ENCODE measurements at regions of chr4 and their contacts with region 1.

Region 1: GRCh38 chr4:705278-706082 is at the start of gene PCGF3:
- DNase-seq: peak; percentile 89 to 99 (median 92)
- ATAC-seq: peak; percentile 99
- H3K4me3 ChIP-seq: peak within 1 kb of the TSS; percentile 84
- H3K4me3 Mint-ChIP-seq: peak within 1 kb of the TSS; percentile 68 to 96 (median 83)
- H3K27ac ChIP-seq: peak within 1 kb of the TSS; percentile 96
- H3K27ac Mint-ChIP-seq: peak within 1 kb of the TSS; percentile 40 to 93 (median 59)
- H3K4me1 ChIP-seq: peaks cover 9 to 11% of the 10 kb centered on the region in 2 donors
- H3K4me1 Mint-ChIP-seq: peaks cover 21 to 30% (median 23%) of the 10 kb centered on the region in 7 donors
- H3K27me3 ChIP-seq: no peaks in the 10 kb centered on the region
- H3K27me3 Mint-ChIP-seq: no peaks in the 10 kb centered on the region
- total RNA-seq, gene PCGF3: 32.7 to 66.8 (median 42.3) TPM

Region 2: DNA sequence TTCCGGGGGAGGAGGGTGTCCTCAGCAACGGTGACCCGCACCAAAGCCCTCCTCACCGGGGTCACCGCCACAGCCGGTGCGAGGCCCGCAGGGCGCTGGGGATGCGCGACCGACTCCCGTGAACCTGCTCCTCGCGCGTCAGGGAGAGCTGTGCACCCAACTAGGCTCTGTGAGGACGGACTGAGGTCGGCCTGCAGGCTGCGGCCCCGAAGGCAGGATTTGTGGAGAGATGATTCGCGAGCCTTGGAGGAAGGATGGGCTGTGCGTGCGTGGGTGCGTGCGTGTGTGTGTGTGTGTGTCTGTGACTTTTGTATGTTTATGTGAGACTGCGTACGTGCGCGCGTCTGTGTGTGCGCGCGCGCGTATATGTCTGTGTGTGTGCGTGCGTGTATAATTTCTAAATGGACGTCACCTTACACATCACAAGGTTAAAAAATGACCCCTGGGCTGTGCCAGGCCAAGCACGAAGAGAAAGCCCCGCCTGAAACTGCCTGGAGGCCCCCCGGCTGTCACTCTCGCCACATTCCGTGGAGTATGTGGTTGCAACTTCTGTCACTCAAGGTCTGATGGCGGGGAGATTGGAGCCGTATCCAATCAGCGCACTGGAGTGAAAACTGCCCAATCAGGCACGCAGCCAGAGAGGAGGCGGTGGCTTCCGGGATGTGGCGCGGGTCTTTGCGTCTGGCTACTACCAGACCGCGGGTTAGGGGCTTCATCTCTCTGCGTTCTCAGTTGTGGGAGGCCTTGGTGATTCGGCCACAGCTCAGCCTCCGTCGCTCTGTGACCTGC is 368.1 kb before region 1 on chr4 and contains the start of gene ZNF141:
- CTCF ChIA-PET with region 1: no interaction called
- POLR2A ChIA-PET with region 1: no interaction called
- intact Hi-C with region 1: loop called in 1 of 2 experiments (anchors 2 kb)
- DNase-seq: peak; percentile 74 to 95 (median 93)
- ATAC-seq: peak; percentile 93
- H3K4me3 ChIP-seq: peak within 1 kb of the TSS; percentile 91
- H3K4me3 Mint-ChIP-seq: peak within 1 kb of the TSS; percentile 93 to 100 (median 99)
- H3K27ac ChIP-seq: peak within 1 kb of the TSS; percentile 85
- H3K27ac Mint-ChIP-seq: peak within 1 kb of the TSS; percentile 95 to 100 (median 99)
- H3K4me1 ChIP-seq: peaks cover 9 to 10% of the 10 kb centered on the region in 2 donors
- H3K4me1 Mint-ChIP-seq: peaks cover 11 to 46% (median 41%) of the 10 kb centered on the region in 7 donors
- H3K27me3 ChIP-seq: no peaks in the 10 kb centered on the region
- H3K27me3 Mint-ChIP-seq: peaks cover 0 to 6% (median 0%) of the 10 kb centered on the region in 5 donors
- total RNA-seq, gene ZNF141: 19.7 to 76.1 (median 29.0) TPM

Region 3: GRCh38 chr4:650951-651883 is 54.3 kb before region 1 on chr4:
- CTCF ChIA-PET with region 1: no interaction called
- POLR2A ChIA-PET with region 1: no interaction called
- intact Hi-C with region 1: no loop called
- DNase-seq: no peak
- ATAC-seq: no peak
- H3K4me3 ChIP-seq: no peak overlapping the region
- H3K4me3 Mint-ChIP-seq: no peak overlapping the region
- H3K27ac ChIP-seq: no peak overlapping the region
- H3K27ac Mint-ChIP-seq: no peak overlapping the region
- H3K4me1 ChIP-seq: no peaks in the 10 kb centered on the region
- H3K4me1 Mint-ChIP-seq: peaks cover 0 to 5% (median 2%) of the 10 kb centered on the region in 7 donors
- H3K27me3 ChIP-seq: no peaks in the 10 kb centered on the region
- H3K27me3 Mint-ChIP-seq: peaks cover 0 to 27% (median 6%) of the 10 kb centered on the region in 5 donors

Region 4: GRCh38 chr4:663438-664428 is 41.7 kb before region 1 on chr4:
- CTCF ChIA-PET with region 1: no interaction called
- POLR2A ChIA-PET with region 1: no interaction called
- intact Hi-C with region 1: loop called in 1 of 2 experiments (anchors 1 kb)
- DNase-seq: peak; percentile 59 to 77 (median 75)
- ATAC-seq: peak; percentile 91
- H3K4me3 ChIP-seq: peak overlapping the region; percentile 86
- H3K4me3 Mint-ChIP-seq: peak overlapping the region; percentile 72 to 95 (median 86)
- H3K27ac ChIP-seq: peak overlapping the region; percentile 90
- H3K27ac Mint-ChIP-seq: peak overlapping the region; percentile 48 to 93 (median 89)
- H3K4me1 ChIP-seq: peaks cover 4 to 5% of the 10 kb centered on the region in 2 donors
- H3K4me1 Mint-ChIP-seq: peaks cover 3 to 33% (median 13%) of the 10 kb centered on the region in 7 donors
- H3K27me3 ChIP-seq: no peaks in the 10 kb centered on the region
- H3K27me3 Mint-ChIP-seq: no peaks in the 10 kb centered on the region

Region 5: DNA sequence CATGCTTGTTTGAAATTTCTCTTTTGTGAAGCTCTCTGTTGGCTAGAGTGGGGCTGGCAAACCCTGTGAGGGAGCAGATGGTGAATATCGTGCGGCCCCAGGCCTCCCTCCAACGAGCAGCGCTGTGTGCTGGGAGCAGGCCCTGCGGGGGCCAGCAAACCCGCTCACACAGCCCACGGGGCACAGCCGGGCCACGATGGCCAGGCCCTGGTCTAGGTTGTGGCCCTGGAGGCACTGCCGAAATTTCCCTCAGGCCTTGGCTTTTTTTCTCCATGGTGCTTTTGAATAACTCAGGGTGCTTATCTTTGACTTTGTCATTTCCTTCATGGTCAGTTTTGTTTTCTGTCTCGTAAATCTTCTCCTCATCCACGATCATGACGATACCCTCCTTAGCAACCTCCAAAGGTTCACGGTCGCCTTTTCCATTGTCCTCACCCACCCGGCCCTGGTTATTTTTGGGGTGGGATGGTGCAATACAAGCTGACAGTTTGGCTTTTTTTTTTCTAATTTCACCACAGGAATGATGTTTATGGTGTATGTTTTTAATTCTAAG is 20.8 kb after region 1 on chr4:
- CTCF ChIA-PET with region 1: no interaction called
- POLR2A ChIA-PET with region 1: no interaction called
- intact Hi-C with region 1: no loop called
- DNase-seq: no peak
- ATAC-seq: no peak
- H3K4me3 ChIP-seq: no peak overlapping the region
- H3K4me3 Mint-ChIP-seq: peak overlapping the region in 1 of 10 donors; percentile 15
- H3K27ac ChIP-seq: no peak overlapping the region
- H3K27ac Mint-ChIP-seq: peak overlapping the region in 1 of 9 donors; percentile 24
- H3K4me1 ChIP-seq: no peaks in the 10 kb centered on the region
- H3K4me1 Mint-ChIP-seq: peaks cover 4 to 29% (median 20%) of the 10 kb centered on the region in 7 donors
- H3K27me3 ChIP-seq: no peaks in the 10 kb centered on the region
- H3K27me3 Mint-ChIP-seq: no peaks in the 10 kb centered on the region

Region 6: GRCh38 chr4:973431-974397 is 268.2 kb after region 1 on chr4 and contains the start of gene DGKQ:
- CTCF ChIA-PET with region 1: no interaction called
- POLR2A ChIA-PET with region 1: no interaction called
- intact Hi-C with region 1: loop called in 1 of 2 experiments (anchors 1 kb)
- DNase-seq: peak; percentile 68 to 93 (median 83)
- ATAC-seq: peak; percentile 96
- H3K4me3 ChIP-seq: peak within 1 kb of the TSS; percentile 56
- H3K4me3 Mint-ChIP-seq: peak within 1 kb of the TSS; percentile 19 to 75 (median 56)
- H3K27ac ChIP-seq: peak within 1 kb of the TSS; percentile 72
- H3K27ac Mint-ChIP-seq: no peak within 1 kb of the TSS
- H3K4me1 ChIP-seq: peaks cover 13 to 26% of the 10 kb centered on the region in 2 donors
- H3K4me1 Mint-ChIP-seq: peaks cover 0 to 17% (median 10%) of the 10 kb centered on the region in 7 donors
- H3K27me3 ChIP-seq: no peaks in the 10 kb centered on the region
- H3K27me3 Mint-ChIP-seq: no peaks in the 10 kb centered on the region
- total RNA-seq, gene DGKQ: 14.9 to 28.0 (median 22.7) TPM

Region 7: DNA sequence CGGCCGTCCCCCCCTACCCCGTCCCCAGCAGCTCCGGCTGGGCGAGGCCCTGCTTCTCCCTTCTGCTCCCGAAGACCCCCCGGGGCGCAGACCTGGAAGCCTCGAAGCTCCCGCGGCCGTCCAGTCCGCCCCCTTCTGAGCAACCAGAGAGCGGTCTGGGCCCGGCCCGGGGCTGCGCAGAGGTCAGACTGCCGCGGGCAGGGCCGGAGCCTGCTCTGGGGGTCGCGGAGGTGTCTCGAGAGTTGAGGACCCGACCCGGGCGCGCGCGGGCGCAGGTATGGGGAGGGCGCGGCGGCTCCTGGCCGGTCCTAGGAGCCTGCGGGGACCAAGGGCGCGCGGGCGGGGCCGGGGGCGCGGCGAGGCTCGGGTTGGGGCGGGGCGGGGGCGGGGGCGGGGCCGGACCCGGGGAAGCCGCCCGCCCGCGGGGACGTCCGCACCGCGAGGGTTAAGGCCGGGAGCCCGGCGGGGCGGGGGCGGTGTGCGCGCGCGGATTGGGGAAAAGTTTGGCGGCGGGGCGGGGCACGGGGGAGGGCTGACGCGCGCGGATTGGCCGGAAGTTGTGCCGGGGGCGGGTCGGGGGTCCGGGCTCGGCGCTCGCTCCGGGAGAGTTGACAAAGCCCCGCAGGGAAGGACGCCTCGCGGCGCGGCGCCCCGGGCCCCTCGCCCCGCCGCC is 305.7 kb after region 1 on chr4 and contains the start of gene FGFRL1:
- CTCF ChIA-PET with region 1: no interaction called
- POLR2A ChIA-PET with region 1: no interaction called
- intact Hi-C with region 1: loop called (anchors 1 to 2 kb)
- DNase-seq: peak; percentile 78 to 95 (median 87)
- ATAC-seq: peak; percentile 78
- H3K4me3 ChIP-seq: peak within 1 kb of the TSS; percentile 77
- H3K4me3 Mint-ChIP-seq: peak within 1 kb of the TSS; percentile 86 to 97 (median 89)
- H3K27ac ChIP-seq: peak within 1 kb of the TSS; percentile 83
- H3K27ac Mint-ChIP-seq: peak within 1 kb of the TSS; percentile 76 to 96 (median 92)
- H3K4me1 ChIP-seq: peaks cover 0 to 10% of the 10 kb centered on the region in 2 donors
- H3K4me1 Mint-ChIP-seq: peaks cover 15 to 21% (median 18%) of the 10 kb centered on the region in 7 donors
- H3K27me3 ChIP-seq: no peaks in the 10 kb centered on the region
- H3K27me3 Mint-ChIP-seq: peaks cover 24 to 31% (median 27%) of the 10 kb centered on the region in 5 donors
- total RNA-seq, gene FGFRL1: 10.6 to 28.1 (median 22.0) TPM

Region 8: DNA sequence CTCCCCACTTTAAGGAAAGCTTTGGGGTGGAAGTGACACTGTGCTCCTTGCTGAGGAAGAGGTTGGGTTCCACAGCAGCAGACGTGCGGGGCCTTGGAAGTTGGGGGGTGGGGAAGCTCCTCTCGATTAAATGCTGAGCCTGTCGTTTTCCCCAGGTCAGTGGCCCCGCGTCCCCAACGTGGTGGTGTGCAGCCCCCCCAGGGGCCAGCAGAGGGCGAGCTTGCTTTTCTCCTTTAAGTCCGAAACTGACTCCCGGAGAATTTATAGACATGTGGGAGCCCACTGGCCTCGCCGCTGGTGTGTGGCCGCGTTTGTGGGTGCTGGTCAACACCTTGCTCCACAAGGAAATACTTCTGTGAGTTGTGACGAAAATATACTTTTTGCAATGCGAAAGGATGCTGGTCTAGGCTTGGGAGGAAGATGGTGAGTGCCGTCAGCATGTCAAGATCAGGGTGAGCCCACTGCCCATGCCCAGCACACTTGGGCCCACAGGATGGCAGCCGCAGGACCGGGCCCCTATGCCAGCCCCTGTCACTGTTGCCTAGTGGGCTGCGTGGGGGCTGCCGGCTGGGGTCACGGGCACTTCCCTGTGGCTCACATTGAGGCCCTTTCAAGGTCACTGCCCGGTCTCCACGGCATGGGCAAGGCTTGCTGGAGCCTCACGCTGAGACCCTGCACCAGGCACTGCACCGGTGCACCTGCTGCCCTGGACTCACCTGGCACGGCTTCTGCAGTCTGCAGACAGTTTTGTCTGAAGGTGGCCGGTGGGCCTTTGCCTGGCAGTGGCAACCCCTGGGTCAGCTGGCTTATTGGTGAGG is 650.9 kb after region 1 on chr4:
- CTCF ChIA-PET with region 1: no interaction called
- POLR2A ChIA-PET with region 1: no interaction called
- intact Hi-C with region 1: no loop called
- DNase-seq: peak in 7 of 9 donors; percentile 22 to 48 (median 41)
- ATAC-seq: peak; percentile 43
- H3K4me3 ChIP-seq: no peak overlapping the region
- H3K4me3 Mint-ChIP-seq: no peak overlapping the region
- H3K27ac ChIP-seq: no peak overlapping the region
- H3K27ac Mint-ChIP-seq: no peak overlapping the region
- H3K4me1 ChIP-seq: peaks cover 0 to 10% of the 10 kb centered on the region in 2 donors
- H3K4me1 Mint-ChIP-seq: peaks cover 4 to 11% (median 7%) of the 10 kb centered on the region in 7 donors
- H3K27me3 ChIP-seq: no peaks in the 10 kb centered on the region
- H3K27me3 Mint-ChIP-seq: no peaks in the 10 kb centered on the region

Region 9: DNA sequence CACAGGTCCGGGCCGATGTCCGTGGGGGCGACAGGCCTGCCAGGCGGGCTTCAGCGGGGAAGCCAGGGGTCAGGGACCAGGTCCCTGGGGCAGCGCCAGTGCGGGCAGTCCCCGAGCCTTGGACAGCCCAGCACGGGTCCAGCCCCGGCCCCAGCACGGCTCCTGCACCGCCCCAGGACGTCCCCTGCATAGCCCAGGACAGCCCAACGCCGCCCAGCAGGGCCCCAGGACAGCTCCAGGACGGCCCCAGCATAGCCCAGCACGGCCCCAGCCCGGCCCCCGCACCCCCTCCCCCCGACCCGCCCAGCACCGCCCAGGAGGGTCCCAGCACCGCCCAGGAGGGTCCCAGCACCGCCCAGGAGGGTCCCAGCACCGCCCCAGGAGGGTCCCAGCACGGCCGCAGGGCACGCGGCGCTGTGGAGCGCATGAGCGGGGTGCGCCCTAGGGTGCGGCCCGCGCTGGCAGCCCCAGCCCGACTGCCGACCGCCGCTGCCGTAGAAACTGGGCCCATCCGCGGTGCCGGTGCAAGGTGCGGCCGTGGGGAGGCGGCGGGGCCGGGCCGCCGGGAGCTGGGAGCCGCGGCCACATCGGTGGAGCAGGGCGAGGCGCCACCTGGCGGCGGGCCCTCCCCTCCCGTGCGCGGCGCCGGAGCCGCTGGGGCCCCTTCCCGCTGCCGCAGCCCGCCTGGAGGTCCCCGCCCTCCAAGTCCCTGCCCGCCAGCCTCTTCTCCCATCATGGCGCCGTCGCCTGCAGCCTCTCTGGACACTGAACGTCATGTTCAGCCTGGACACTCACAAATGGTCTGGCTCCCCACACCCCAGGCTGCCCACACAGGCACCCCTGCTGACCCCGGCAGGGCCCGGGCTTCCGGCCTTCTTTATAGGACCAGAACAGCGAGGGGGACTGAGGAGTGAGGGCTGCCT is 807.5 kb after region 1 on chr4:
- CTCF ChIA-PET with region 1: no interaction called
- POLR2A ChIA-PET with region 1: no interaction called
- intact Hi-C with region 1: no loop called
- DNase-seq: peak in 8 of 9 donors; percentile 5 to 66 (median 50)
- ATAC-seq: peak; percentile 64
- H3K4me3 ChIP-seq: no peak overlapping the region
- H3K4me3 Mint-ChIP-seq: peak overlapping the region in 5 of 10 donors; percentile 41 to 63 (median 59)
- H3K27ac ChIP-seq: no peak overlapping the region
- H3K27ac Mint-ChIP-seq: no peak overlapping the region
- H3K4me1 ChIP-seq: no peaks in the 10 kb centered on the region
- H3K4me1 Mint-ChIP-seq: no peaks in the 10 kb centered on the region
- H3K27me3 ChIP-seq: peaks cover 0 to 3% of the 10 kb centered on the region in 2 donors
- H3K27me3 Mint-ChIP-seq: peaks cover 0 to 11% (median 5%) of the 10 kb centered on the region in 5 donors